WTC11 (cell line): ENCODE measurements at regions of chr16 and their contacts with region 1.

Region 1: GRCh38 chr16:73846356-73846755 is 450.3 kb upstream of the PSMD7 start:
- DNase-seq: peak; percentile 52
- ATAC-seq: peak; percentile 69; the same call in 1 of the 2 replicates
- H3K4me3 Mint-ChIP-seq: no peak overlapping the region
- H3K27ac Mint-ChIP-seq: no peak overlapping the region
- H3K4me1 Mint-ChIP-seq: peaks cover 14% of the 10 kb centered on the region
- H3K27me3 Mint-ChIP-seq: no peaks in the 10 kb centered on the region
- CTCF ChIP-seq: no peak

Region 2: DNA sequence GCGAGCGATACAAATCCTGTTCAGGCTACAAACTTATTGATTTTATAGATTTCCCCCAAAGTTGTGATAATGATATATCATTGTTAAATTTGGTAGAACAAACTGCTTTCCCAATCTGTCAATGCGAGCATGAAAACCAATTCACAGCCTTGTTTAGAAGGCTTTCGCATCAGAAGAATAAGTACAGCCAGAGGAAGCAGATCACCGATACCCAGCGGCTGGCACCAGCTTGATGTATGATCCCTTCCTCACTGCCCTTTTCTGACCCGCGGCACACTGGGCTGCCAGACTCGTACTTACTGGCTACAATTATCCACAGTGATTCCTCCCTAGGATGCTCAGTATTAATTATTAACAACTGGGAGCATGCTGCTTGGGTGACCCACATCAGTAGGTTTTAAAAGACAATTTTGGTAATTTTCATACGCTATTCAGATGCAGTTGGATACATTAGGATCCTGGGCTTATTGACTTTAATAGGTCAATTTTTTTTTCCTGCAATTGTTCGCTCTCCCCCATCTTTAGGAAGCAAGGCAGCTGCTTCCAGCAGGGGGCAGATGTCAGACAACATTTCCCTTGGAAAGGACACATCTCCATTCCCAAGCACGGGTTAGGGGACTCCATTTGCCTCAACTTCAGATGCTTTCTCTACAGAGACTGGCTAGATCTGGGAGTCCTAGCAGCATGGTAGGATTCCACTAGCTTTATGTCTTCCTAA is 132.4 kb before region 1 on chr16:
- CTCF ChIA-PET with region 1: interaction called, 15 read pairs
- POLR2A ChIA-PET with region 1: no interaction called
- DNase-seq: peak; percentile 69
- ATAC-seq: peak; percentile 58
- H3K4me3 Mint-ChIP-seq: no peak overlapping the region
- H3K27ac Mint-ChIP-seq: peak overlapping the region; percentile 61
- H3K4me1 Mint-ChIP-seq: peaks cover 71% of the 10 kb centered on the region
- H3K27me3 Mint-ChIP-seq: no peaks in the 10 kb centered on the region
- CTCF ChIP-seq: peak; percentile 56

Region 3: DNA sequence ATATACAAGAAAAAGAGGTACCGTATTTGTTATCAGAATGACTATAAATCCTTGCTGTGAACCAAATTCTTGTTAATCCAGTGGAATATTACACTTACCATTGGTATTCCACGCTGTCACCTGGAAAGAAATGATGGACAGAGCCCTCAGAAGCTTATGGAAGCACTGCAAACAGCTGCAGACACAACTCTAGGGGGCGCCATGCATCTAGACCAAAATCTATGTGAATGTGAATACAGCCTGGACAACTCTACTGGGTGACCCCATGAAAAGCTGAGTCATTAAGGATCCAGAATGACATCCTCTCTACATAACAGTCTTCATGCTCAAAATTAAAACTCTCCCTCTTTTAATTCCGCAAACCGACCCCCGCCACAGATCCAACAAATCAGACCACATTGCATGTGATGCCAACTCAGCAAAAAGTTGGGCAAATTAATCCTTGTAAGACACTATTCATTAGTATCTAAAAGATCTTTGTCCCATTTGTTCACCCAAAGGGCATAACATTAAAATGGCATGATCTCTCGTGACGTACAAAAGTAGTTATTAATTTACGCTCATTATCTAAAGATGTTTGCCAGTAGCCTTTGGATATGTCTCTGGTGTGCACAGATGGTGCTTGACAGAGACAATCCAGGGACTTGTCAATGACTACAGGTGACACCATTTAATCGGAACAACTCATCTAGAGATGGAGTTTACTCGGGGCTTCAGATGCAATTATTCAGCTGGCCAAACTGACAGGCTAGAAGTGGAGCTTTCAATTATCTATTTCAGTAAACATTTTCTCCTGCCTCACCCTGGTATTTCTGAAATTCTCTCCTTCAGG is 102.5 kb before region 1 on chr16:
- CTCF ChIA-PET with region 1: interaction called, 16 read pairs
- POLR2A ChIA-PET with region 1: no interaction called
- DNase-seq: peak; percentile 52
- ATAC-seq: peak; percentile 50
- H3K4me3 Mint-ChIP-seq: no peak overlapping the region
- H3K27ac Mint-ChIP-seq: no peak overlapping the region; the same call in 1 of the 2 replicates
- H3K4me1 Mint-ChIP-seq: peaks cover 12% of the 10 kb centered on the region
- H3K27me3 Mint-ChIP-seq: no peaks in the 10 kb centered on the region
- CTCF ChIP-seq: peak; percentile 36; the same call in 1 of the 2 replicates